ENCODE measurements at regions of chr18 and their contacts with region 1.

Region 1: DNA sequence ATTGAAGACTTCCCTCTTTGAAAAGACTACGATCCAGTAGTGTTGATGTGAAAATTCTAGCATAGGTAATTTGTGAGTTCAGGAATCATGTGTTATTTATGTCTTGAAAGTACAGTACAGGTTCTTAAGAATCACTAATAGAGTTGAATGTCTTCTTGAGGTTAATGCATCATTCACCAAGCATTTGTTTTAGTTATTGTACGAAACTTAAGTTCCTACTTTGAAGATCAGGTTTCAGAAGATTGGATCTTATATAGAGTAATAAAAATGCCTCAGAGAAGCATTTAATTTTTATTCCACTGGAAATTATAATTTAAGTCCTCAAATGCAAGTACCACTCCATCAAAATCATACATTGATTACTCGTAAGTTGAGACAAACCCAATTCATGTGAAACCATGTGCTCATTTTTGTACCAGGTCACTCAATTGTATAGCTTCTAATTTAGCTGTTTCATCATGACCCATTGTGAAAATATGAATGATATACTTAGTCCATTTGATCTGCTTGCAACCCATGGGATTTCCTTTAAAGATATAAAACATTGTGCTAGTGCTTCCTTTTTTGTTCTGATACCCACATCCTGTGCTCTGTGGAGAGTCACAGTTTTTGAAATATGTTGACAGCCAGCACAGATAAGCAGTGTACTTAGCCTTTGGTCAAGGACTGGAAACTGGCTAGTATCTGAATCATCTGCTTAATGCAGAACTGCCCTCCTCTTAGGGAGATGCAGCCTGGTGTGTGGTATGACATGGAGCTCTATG is 22.5 kb upstream of the RAB27B start:
- DNase-seq: peak; percentile 73
- H3K4me3 Mint-ChIP-seq: no peak overlapping the region
- H3K27ac Mint-ChIP-seq: peak overlapping the region; percentile 61
- H3K4me1 Mint-ChIP-seq: peaks cover 12% of the 10 kb centered on the region
- H3K27me3 Mint-ChIP-seq: peaks cover 17% of the 10 kb centered on the region

Region 2: GRCh38 chr18:54717673-54718407 is 87.9 kb before region 1 on chr18:
- intact Hi-C with region 1: loop called (anchors 5 kb)
- DNase-seq: peak; percentile 88
- H3K4me3 Mint-ChIP-seq: peak overlapping the region; percentile 77
- H3K27ac Mint-ChIP-seq: peak overlapping the region; percentile 15
- H3K4me1 Mint-ChIP-seq: peaks cover 48% of the 10 kb centered on the region
- H3K27me3 Mint-ChIP-seq: peaks cover 29% of the 10 kb centered on the region

Measured in activated CD4-positive, alpha-beta T cell treated with anti-CD3 and anti-CD28 coated beads, Interleukin-2, amount 10 ng/mL, durations not matched to agents 24 days and 14 days (primary cell).